AG04449 (cell line): ENCODE measurements at regions of chr14 and their contacts with region 1.

Region 1: DNA sequence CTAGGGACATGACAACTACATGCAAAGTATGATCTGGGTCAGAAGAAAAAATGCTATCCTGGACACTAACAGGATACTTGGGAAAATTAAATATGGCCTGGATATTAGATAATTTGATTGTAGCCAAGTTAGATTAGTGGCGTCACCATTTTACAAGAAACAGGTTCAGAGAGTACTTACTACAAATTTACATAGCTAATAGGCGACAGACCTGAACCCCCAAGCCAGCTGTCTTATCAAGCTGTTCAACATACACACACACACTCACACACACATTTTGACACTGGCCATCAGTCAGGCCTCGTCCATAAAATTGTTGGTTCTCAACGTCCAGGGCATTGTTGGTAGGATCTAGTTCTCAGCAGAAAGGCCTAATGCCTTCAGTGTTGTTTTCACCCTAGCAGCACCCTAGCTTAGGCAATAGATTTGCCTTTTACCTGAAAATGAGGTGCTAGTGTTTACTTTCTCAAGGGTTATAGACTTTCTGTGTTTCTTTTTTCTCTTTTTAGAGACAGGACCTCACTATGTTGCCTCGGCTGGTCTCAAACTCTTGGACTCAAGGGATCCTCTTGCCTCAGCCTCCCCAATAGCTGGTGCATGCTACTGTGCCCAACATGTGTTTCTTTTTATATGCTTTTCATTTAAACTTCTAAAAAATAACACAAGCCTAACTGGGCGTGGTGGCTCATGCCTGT is 3.3 kb upstream of the C14orf93 start:
- DNase-seq: no peak
- H3K4me3 ChIP-seq: no peak overlapping the region
- CTCF ChIP-seq: no peak

Region 2: DNA sequence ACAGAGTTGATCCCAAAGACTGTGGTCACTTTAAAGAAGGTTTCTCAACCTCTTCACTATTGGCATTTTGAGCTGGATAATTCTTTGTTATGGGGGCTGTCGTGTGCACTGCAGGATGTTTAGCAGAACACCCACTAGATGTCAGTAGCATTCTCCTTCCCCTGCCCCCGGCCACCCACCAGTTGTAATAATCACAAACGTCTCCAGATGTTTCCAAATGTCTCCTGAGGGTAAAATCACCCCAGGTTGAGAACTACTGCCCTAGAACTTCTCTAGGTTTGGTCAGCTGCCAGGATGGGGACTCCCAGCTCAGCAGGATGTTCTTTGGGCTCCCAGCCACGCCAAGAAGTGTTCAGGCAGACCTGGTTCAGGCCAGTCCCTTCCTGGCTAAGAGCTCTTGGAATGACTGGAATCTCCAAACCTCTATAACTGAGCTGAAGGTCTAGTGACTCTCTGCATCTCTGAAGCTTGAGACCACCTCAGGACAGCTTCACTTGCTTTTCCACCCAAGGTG is 18.4 kb before region 1 on chr14:
- CTCF ChIA-PET with region 1: interaction called, 70 read pairs
- POLR2A ChIA-PET with region 1: no interaction called
- DNase-seq: no peak
- H3K4me3 ChIP-seq: no peak overlapping the region
- CTCF ChIP-seq: peak; percentile 65

Region 3: DNA sequence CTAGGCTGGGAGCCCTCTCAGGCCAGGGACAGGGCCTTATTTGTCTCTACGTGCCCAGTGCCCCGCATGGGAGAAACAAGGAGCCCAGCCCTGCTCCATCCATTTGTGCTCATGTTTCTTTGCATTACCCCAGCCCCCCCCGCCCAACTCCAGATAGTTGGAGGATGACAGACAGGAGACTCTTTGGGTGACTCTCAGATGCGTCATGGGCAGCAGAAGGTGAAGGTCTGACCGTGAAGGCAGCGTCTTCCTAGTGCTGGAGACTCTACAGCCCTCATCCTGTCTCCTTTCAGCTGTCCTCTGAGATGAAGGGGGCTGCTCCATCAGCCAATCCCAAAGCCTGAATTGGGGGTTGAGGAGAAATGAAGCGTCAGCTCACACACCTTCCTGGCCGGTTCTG is 28.5 kb after region 1 on chr14:
- CTCF ChIA-PET with region 1: no interaction called
- POLR2A ChIA-PET with region 1: no interaction called
- DNase-seq: no peak
- H3K4me3 ChIP-seq: no peak overlapping the region
- CTCF ChIP-seq: no peak

Region 4: GRCh38 chr14:23120541-23121251 is 107.5 kb after region 1 on chr14:
- CTCF ChIA-PET with region 1: no interaction called
- POLR2A ChIA-PET with region 1: no interaction called
- DNase-seq: no peak
- H3K4me3 ChIP-seq: no peak overlapping the region
- CTCF ChIP-seq: peak; percentile 99